ENCODE measurements at regions of chr2 and their contacts with region 1.

Region 1: DNA sequence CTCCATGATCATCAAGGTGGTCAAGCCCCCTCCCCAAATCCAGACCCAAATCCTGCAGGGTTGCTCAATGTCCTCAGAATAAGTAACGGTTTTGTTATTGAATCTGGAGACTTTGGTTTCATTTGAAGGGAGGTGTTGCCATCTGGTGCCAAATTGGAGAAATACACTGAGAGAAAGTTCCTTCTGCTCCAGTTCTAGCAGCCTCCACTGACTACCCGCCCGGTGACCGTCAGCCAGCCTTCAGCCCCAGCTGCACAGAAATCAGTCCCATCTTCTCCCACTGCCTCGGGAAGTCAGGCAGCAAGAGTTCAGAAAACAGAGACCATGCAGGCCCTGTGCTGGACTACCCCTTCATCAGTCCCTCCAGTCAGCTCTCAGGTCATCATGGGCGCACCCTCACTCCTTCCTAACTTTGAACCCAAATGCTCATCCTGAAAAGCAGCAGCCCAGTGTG is 38.7 kb downstream of the PKDCC start:
- DNase-seq: no peak
- H3K4me3 ChIP-seq: no peak overlapping the region
- H3K27me3 ChIP-seq: peaks cover 2% of the 10 kb centered on the region; the same call in 1 of the 2 replicates
- CTCF ChIP-seq: peak; percentile 70

Region 2: DNA sequence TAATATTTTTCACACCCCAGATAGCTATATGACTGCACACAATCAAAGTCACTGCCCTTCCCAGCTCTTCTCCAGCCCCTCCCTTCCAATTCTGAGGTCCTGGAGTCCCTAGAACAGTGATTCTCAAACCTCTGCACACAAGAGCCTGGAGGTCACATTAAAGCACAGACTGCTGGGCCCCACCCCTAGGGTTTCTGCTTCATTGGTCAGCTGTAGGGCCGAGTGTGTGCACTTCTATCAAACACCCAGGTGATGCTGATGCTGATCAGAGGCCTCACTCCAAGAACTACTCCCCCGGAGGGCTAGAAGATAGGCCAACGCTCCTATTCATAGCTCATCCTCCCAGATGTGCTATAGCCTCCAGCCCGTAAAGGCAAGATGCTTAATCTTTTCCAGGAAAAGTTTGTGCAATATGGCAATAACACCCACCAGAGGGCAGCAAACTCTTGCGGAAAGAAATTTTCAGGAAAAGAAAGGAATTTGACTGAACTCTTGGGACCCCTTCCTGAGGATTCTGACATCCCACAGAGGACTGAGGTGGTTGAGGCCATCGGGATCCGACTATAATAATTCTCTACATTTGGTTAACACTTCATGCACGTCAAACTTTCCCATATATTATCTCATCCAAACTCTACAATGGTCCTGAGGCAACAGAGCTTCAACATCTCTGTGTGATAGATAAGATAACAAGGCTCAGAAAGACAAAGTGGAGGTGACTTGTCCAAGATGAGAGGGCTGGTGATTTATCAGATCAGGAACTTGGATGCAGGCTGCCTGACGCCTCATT is 232.9 kb before region 1 on chr2:
- CTCF ChIA-PET with region 1: interaction called, 318 read pairs
- POLR2A ChIA-PET with region 1: no interaction called
- DNase-seq: no peak
- H3K4me3 ChIP-seq: no peak overlapping the region
- H3K27me3 ChIP-seq: peaks cover 2% of the 10 kb centered on the region
- CTCF ChIP-seq: peak; percentile 74

Region 3: GRCh38 chr2:41869542-41870264 is 216.8 kb before region 1 on chr2:
- CTCF ChIA-PET with region 1: interaction called, 422 read pairs
- POLR2A ChIA-PET with region 1: no interaction called
- DNase-seq: no peak
- H3K4me3 ChIP-seq: no peak overlapping the region
- H3K27me3 ChIP-seq: peaks cover 4% of the 10 kb centered on the region; the same call in 1 of the 2 replicates
- CTCF ChIP-seq: peak; percentile 84

Region 4: GRCh38 chr2:41886757-41887156 is 199.8 kb before region 1 on chr2:
- CTCF ChIA-PET with region 1: interaction called, 18 read pairs
- POLR2A ChIA-PET with region 1: no interaction called
- DNase-seq: no peak
- H3K4me3 ChIP-seq: no peak overlapping the region
- H3K27me3 ChIP-seq: no peaks in the 10 kb centered on the region
- CTCF ChIP-seq: no peak

Region 5: DNA sequence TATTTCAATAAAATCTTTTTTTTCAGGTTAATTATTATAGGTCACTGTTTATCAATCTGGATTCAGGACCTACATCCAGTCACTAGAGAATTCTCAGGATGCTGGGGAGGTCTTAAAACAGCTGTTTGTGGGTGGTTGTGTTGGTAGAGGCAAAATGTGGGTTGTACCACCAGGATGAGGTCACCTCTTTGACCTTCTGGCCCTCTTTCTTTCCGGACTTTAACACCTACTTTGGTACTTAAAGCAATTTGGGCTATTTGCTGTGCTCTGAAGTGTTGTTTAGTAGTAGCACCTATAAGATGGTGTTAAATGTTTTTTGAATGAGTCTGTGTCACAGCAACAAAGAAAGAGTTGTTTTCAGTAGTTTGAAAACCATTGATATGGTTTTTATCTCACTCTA is 97.2 kb after region 1 on chr2:
- CTCF ChIA-PET with region 1: no interaction called
- POLR2A ChIA-PET with region 1: no interaction called
- DNase-seq: no peak
- H3K4me3 ChIP-seq: no peak overlapping the region
- H3K27me3 ChIP-seq: no peaks in the 10 kb centered on the region
- CTCF ChIP-seq: no peak

Region 6: DNA sequence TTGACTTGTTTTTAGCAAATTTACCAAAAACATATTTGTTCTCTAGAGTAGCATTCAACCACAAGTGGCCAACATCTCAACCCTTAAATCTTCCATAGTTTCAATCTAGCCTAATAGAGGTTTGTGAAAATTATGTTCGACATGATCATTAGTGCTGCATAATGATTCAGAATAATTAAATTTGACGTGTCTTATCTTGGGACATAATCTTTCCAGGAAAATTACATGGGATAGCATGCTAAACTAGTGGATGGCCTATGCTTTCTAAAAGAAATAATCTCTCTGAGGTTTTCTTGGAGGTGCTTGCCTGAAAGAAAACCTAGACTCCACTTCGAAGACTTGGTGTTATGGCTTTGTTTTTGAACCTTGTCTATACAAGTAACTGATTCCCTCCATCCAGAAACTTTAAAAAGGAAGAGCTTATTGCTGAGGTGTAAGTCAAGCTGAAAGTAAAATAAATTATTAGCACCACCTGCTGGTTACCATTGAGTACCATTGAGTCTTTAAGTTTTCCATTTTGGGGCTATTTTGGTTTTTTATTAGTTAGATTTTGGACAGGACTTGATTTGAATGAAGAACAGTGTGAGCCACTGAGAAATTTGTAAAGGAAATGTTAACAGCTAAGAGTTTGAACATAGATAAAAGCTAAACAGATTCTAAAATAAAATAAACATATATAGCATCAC is 241.8 kb after region 1 on chr2:
- CTCF ChIA-PET with region 1: interaction called, 10 read pairs
- POLR2A ChIA-PET with region 1: no interaction called
- DNase-seq: no peak
- H3K4me3 ChIP-seq: no peak overlapping the region
- H3K27me3 ChIP-seq: no peaks in the 10 kb centered on the region
- CTCF ChIP-seq: peak; percentile 50

Measured in BJ (cell line).